Activated naive CD4-positive, alpha-beta T cell treated with anti-CD3 and anti-CD28 coated beads for 36 hours (primary cell): ENCODE measurements at regions of chr10 and their contacts with region 1.

Region 1: DNA sequence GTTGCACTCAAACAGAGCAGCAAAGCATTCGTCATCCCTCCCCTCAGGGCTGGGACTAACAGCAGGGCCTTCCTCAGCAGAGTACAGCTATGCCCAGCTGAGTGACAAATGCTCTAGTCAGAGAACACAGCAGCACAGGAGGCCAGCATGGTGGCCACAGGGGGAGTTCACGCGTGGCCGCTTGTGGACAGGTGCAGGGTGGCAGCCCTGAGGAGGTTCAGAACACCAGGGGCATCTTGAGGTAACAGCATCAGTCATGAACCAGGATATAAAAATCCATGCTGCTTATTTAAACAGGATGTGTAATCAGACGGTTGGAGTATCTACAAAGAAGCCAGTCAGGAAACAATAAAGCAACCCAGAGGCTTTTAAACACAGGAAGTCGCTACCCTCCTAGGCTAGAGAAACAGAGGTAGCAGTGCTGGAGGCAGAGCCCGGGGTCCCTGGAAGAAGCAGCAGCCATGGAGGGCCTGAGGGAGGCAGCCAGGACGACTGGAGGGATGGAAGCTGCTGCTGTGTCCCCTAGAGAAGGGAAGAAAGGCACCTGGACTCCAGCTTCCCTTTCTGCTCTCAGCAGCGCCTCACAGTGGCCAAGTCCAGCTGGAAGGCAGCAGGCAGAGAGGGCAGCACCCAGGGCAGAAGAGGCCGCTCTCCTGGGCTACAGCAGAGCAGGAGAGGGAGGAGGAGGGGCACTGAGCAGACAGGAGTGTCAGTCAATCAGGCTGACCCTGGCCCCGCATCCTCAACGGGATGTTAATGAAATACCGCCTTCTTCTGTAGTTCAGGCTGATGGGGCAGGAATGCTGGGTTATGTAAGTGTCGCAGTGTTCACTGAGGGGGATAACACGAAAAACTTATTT is 70.8 kb upstream of the UCN3 start:
- DNase-seq: peak; percentile 92
- H3K4me3 Mint-ChIP-seq: peak overlapping the region; percentile 85
- H3K27ac Mint-ChIP-seq: peak overlapping the region; percentile 96
- H3K4me1 Mint-ChIP-seq: peaks cover 73% of the 10 kb centered on the region
- H3K27me3 Mint-ChIP-seq: no peaks in the 10 kb centered on the region

Region 2: DNA sequence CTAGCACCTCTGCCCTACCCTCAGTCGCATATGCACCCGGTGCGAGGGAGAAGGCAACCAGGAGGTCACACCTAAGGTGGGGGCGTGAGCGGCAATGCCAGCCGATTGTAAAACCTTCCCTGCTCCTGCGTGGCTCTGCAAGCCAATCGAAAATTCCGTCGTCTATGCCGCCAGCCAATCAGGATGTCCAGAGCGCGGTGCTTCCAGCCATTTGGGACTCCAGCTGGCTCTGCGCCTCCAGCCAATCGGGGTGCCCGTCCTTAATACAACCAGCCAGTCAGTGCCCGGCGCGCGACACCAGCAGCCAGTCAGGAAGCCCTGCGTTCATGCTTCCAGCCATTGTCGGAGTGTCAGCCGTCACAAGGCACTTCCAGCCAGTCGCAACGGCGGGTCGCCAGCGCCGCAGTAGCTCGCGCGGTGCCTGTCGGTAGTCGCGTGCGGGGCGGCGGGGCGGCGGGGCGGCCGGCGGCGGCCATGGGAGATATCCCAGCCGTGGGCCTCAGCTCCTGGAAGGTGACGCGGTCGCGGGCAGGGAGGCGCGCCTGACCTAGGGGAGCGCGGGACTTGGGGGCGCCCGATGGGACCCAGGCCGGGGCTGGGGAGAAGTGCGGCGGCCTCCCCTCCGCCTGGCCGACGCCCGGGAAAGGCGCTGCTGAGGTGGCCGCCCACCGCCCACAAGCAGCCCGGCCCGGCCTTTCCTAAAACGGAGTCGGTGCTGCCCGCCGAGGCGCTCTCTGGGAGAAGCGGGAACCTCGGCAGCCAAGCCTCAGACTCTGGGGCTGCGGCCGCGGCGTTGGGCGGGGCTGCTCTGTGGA is 467.9 kb before region 1 on chr10 and contains the start of gene AKR1E2:
- CTCF ChIA-PET with region 1: no interaction called
- intact Hi-C with region 1: loop called (anchors 5 kb)
- DNase-seq: peak; percentile 87
- H3K4me3 Mint-ChIP-seq: peak within 1 kb of the TSS; percentile 73
- H3K27ac Mint-ChIP-seq: peak within 1 kb of the TSS; percentile 33
- H3K4me1 Mint-ChIP-seq: peaks cover 21% of the 10 kb centered on the region
- H3K27me3 Mint-ChIP-seq: no peaks in the 10 kb centered on the region
- total RNA-seq, gene AKR1E2: 7.1 to 7.3 TPM

Region 3: GRCh38 chr10:5317547-5318107 is 23.7 kb after region 1 on chr10:
- CTCF ChIA-PET with region 1: interaction called, 5 read pairs
- intact Hi-C with region 1: loop called (anchors 1 kb)
- DNase-seq: peak; percentile 96
- H3K4me3 Mint-ChIP-seq: peak overlapping the region; percentile 28
- H3K27ac Mint-ChIP-seq: peak overlapping the region; percentile 89
- H3K4me1 Mint-ChIP-seq: peaks cover 73% of the 10 kb centered on the region
- H3K27me3 Mint-ChIP-seq: no peaks in the 10 kb centered on the region

Region 4: GRCh38 chr10:5548527-5549223 is 254.8 kb after region 1 on chr10:
- CTCF ChIA-PET with region 1: no interaction called
- intact Hi-C with region 1: loop called (anchors 10 kb)
- DNase-seq: peak; percentile 78
- H3K4me3 Mint-ChIP-seq: no peak overlapping the region
- H3K27ac Mint-ChIP-seq: no peak overlapping the region
- H3K4me1 Mint-ChIP-seq: peaks cover 30% of the 10 kb centered on the region
- H3K27me3 Mint-ChIP-seq: no peaks in the 10 kb centered on the region

Region 5: GRCh38 chr10:5977471-5978229 is 683.7 kb after region 1 on chr10 and contains the start of gene IL15RA:
- CTCF ChIA-PET with region 1: no interaction called
- intact Hi-C with region 1: loop called (anchors 10 kb)
- DNase-seq: peak; percentile 91
- H3K4me3 Mint-ChIP-seq: peak within 1 kb of the TSS; percentile 97
- H3K27ac Mint-ChIP-seq: peak within 1 kb of the TSS; percentile 97
- H3K4me1 Mint-ChIP-seq: peaks cover 24% of the 10 kb centered on the region
- H3K27me3 Mint-ChIP-seq: no peaks in the 10 kb centered on the region
- total RNA-seq, gene IL15RA: 14.7 to 16.3 TPM